Common myeloid progenitor, CD34-positive (primary cell): ENCODE measurements at regions of chr20 and their contacts with region 1.

Region 1: DNA sequence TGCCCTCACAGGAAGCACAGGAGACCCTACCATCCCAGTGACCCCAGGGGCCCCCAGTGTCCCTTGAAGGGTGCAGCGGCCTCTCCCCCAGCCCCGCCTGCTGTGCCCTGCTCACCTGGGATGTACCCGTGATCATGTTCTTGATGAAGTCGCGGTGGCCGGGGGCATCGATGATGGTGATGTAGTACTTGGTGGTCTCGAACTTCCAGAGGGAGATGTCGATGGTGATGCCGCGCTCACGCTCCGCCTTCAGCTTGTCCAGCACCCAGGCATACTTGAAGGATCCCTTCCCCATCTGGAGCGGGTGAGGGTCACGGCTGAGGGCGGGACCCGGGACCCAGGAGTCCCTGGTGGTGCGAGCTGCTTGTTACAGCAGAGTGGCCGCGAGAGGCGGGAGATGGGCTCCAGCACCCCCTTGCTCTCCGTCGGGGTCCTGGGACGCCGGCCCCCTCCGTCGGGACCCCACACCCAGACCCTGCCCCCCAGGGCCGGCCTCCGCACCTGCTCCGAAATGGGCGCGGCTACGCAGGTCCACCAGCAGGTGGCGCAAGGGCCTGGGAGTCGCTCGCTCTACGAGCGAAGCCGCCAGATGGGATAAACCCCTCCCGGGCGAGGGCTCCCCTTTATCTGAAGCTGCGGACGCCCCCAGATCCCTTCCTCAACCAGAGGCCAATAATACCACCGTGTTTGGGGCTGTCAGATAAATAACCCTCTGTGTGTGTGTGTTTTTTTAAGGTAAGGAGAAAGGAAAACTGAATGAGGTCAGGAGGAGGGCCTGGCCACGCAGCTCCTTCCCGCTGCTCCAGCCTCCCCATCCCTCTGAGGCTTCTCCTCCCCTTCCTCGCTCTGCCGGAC is 2.9 kb downstream of the EEF1A2 start:
- DNase-seq: peak; percentile 52 to 67 (median 66)
- H3K4me3 ChIP-seq: peak overlapping the region in 4 of 7 experiments; percentile 31 to 63 (median 50)
- H3K27ac ChIP-seq: no peak overlapping the region
- H3K4me1 ChIP-seq: peaks cover 0 to 16% (median 11%) of the 10 kb centered on the region in 4 experiments
- H3K27me3 ChIP-seq: peaks cover 0 to 70% (median 11%) of the 10 kb centered on the region in 5 experiments

Region 2: GRCh38 chr20:62550087-62550632 is 945.8 kb before region 1 on chr20:
- CTCF ChIA-PET with region 1: no interaction called
- POLR2A ChIA-PET with region 1: no interaction called
- DNase-seq: no peak
- H3K4me3 ChIP-seq: peak overlapping the region in 3 of 7 experiments; percentile 66 to 72 (median 72)
- H3K27ac ChIP-seq: no peak overlapping the region
- H3K4me1 ChIP-seq: peaks cover 0 to 53% (median 50%) of the 10 kb centered on the region in 4 experiments
- H3K27me3 ChIP-seq: peaks cover 0 to 36% (median 2%) of the 10 kb centered on the region in 5 experiments

Region 3: DNA sequence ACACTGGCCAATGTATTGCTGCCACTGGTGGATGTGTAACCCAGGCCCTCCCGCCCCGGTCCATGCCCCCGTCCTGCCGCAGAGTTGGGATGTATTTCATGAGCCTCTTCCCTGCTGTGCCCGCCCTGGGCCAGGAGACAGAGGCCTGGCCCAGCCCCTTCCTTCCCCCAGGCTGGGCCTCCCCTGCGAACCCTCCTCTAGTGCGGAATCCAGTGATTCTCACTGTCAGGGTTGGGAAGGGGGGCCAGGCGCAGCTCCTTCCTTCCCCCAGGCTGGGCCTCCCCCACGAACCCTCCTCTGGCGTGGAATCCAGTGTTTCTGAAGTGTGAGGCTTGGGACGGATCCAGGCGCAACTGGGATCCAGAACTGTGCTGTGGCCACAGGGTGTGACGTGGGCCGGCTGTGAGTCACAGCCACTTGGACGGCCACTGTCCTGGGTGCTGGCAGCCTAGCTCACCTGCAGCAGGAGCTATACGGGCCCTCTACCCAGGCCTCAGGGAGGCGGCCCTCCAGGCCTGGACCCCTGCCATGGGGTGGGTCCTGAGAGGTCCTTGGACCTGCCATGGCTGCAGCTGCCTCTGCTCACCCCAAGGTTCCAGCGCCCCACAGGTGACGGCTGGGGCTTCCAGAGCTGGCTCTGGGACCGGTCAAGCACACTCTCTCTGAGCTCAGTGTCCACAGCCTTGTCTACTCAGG is 174.7 kb before region 1 on chr20:
- CTCF ChIA-PET with region 1: no interaction called
- POLR2A ChIA-PET with region 1: no interaction called
- DNase-seq: no peak
- H3K4me3 ChIP-seq: no peak overlapping the region
- H3K27ac ChIP-seq: no peak overlapping the region
- H3K4me1 ChIP-seq: no peaks in the 10 kb centered on the region
- H3K27me3 ChIP-seq: peaks cover 3 to 45% (median 8%) of the 10 kb centered on the region in 5 experiments

Region 4: GRCh38 chr20:63446216-63447024 is 49.5 kb before region 1 on chr20:
- CTCF ChIA-PET with region 1: interaction called, 12 read pairs
- POLR2A ChIA-PET with region 1: no interaction called
- DNase-seq: peak; percentile 44 to 75 (median 72)
- H3K4me3 ChIP-seq: no peak overlapping the region
- H3K27ac ChIP-seq: no peak overlapping the region
- H3K4me1 ChIP-seq: peaks cover 0 to 27% (median 24%) of the 10 kb centered on the region in 4 experiments
- H3K27me3 ChIP-seq: peaks cover 0 to 2% (median 0%) of the 10 kb centered on the region in 5 experiments

Region 5: GRCh38 chr20:63482856-63483695 is 12.9 kb before region 1 on chr20:
- CTCF ChIA-PET with region 1: interaction called, 12 read pairs
- POLR2A ChIA-PET with region 1: interaction called, 3 read pairs
- DNase-seq: peak; percentile 37 to 77 (median 68)
- H3K4me3 ChIP-seq: no peak overlapping the region
- H3K27ac ChIP-seq: no peak overlapping the region
- H3K4me1 ChIP-seq: peaks cover 0 to 7% (median 3%) of the 10 kb centered on the region in 4 experiments
- H3K27me3 ChIP-seq: peaks cover 0 to 73% (median 11%) of the 10 kb centered on the region in 5 experiments

Region 6: DNA sequence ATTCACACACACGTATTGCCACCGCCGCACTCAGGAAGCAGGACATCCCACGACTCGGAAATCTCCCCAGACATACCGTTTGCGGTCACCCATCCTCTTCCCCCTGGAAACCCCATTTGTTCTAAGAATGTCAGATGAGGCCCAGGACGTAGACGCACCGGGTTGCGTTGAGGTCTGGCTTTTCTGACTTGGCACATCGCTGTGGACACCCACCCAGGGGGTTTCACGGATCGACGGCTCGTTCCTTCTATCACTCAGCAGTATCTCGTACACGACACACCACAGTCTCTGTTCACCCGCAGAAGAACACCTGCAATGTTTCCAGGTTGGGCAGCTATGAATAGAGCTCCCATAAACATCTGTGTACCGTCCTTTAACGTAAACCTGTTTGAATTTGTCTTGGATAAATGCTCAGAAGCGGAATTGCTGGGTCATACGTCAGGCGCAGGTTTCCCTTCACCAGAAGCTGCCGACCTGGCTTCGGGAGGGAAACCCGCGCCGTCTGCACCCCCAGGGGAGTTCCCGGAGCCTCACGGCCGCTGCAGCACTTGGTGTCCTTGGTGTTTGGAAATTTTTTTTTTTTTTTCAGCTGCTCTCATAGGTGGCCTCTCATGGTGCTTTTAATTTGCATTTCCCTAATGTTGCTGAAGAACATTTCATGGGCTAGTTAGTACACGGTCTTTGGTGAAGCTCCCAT is 12.3 kb after region 1 on chr20:
- CTCF ChIA-PET with region 1: interaction called, 11 read pairs
- POLR2A ChIA-PET with region 1: no interaction called
- DNase-seq: no peak
- H3K4me3 ChIP-seq: no peak overlapping the region
- H3K27ac ChIP-seq: no peak overlapping the region
- H3K4me1 ChIP-seq: peaks cover 0 to 6% (median 3%) of the 10 kb centered on the region in 4 experiments
- H3K27me3 ChIP-seq: peaks cover 6 to 44% (median 8%) of the 10 kb centered on the region in 5 experiments

Region 7: DNA sequence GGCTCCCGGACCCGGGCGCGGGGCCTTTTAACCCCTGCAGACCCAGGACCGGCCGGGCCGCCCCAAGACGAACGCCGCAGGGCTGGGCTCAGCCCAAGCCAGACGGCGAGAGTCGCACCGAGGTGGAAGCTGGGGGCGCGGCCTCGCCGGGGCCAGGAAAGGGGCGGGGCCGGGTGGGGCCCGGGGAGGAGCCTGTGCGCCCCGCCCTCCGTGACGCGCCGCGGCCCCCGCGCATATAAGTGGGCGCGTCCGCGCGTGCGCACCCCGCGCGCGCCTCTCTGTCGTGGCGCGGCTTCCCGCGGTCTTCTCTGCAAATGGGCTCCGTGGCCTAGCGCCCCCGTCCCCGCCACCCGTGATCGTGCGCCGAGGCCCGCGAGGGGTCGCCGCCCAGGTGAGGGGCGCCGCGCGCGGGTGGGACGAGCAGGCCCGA is 24.6 kb after region 1 on chr20 and contains the start of gene PPDPF:
- CTCF ChIA-PET with region 1: interaction called, 16 read pairs
- POLR2A ChIA-PET with region 1: interaction called, 7 read pairs
- DNase-seq: peak; percentile 74 to 88 (median 88)
- H3K4me3 ChIP-seq: peak within 1 kb of the TSS; percentile 52 to 83 (median 76)
- H3K27ac ChIP-seq: peak within 1 kb of the TSS in 1 of 2 experiments; percentile 64
- H3K4me1 ChIP-seq: peaks cover 0 to 28% (median 21%) of the 10 kb centered on the region in 4 experiments
- H3K27me3 ChIP-seq: no peaks in the 10 kb centered on the region

Region 8: DNA sequence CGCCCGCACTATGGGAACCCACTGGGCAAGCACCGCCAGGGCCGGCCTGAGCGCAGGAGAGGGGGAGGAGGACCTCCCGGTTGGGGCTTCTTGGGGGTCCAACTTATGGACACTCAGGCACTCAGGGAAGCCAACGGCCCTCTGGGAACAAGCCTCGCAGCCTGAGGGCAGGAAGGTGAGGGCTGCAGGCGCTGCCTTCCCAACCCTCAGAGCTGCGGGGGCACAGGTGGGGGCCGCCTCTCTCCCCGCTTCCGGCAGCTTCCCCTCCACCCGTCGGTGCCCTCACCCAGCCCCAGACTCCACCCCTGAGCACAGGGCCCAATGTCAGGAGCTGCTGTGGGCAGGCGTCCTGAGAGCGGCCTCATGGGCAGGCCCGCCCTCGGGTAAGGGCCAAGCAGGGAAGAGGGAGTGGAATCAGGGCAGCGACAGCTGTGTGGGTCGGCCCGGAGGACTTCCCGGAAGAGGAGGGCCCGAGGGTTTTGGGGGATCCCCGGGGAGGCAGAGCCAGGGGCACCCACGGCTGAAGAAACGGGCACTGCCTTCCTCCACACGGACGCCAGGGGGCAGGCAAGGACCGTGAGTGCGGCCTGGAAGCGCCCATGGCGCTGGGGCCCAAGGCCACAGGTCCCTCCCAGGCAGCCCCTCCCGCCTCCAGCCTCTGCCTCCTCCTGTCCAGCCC is 41.7 kb after region 1 on chr20:
- CTCF ChIA-PET with region 1: interaction called, 11 read pairs
- POLR2A ChIA-PET with region 1: no interaction called
- DNase-seq: peak; percentile 87 to 96 (median 95)
- H3K4me3 ChIP-seq: peak overlapping the region in 5 of 7 experiments; percentile 36 to 75 (median 61)
- H3K27ac ChIP-seq: no peak overlapping the region
- H3K4me1 ChIP-seq: peaks cover 0 to 26% (median 19%) of the 10 kb centered on the region in 4 experiments
- H3K27me3 ChIP-seq: no peaks in the 10 kb centered on the region

Region 9: GRCh38 chr20:63653078-63653973 is 157.4 kb after region 1 on chr20 and contains the start of gene STMN3:
- CTCF ChIA-PET with region 1: no interaction called
- POLR2A ChIA-PET with region 1: no interaction called
- DNase-seq: peak; percentile 92 to 96 (median 94)
- H3K4me3 ChIP-seq: peak within 1 kb of the TSS; percentile 61 to 86 (median 79)
- H3K27ac ChIP-seq: peak within 1 kb of the TSS in 1 of 2 experiments; percentile 49
- H3K4me1 ChIP-seq: peaks cover 0 to 46% (median 44%) of the 10 kb centered on the region in 4 experiments
- H3K27me3 ChIP-seq: no peaks in the 10 kb centered on the region